ENCODE measurements at regions of chr9 and their contacts with region 1.

Region 1: DNA sequence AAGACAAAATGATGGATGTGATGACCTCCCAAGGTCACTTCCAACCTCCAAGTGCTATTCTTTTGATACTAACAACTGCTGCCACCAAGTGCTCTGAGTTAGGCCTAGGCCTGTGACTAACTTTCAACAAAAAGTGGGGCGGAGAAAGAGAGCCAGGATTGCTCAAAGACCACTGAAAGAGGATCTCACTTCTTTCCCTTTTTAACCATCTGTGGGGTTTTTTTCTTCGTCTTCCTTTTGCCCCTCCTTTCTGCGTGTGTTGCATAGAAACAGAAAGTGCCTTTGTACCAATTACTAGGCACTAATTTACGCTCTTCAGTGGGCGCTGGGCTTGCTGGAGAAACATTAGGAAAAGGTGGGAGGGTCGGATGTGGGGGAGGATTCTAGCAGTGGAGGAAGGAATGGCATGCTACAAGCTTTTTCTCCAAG is 8.0 kb downstream of the KLF9 start:
- H3K4me3 ChIP-seq: no peak overlapping the region
- H3K27ac ChIP-seq: no peak overlapping the region
- H3K4me1 ChIP-seq: peaks cover 25% of the 10 kb centered on the region
- CTCF ChIP-seq: no peak

Region 2: DNA sequence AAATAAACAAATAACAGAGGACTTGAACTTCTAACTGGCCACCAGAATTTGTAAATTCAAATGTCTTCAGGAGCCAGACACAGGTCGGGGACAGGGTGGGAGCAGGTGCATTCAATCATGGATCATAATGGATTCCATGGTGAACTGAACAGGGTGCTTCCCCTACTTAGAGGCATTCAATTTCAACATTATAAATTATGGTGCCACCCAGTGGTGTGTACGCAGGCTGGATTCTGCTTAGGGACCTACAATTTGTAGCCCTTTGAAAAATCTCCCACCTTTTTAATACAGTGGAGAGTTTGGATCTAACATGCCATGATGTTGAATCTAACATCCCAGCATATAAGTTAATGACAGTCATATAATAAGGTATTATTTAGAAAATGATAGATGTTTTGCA is 14.3 kb before region 1 on chr9:
- CTCF ChIA-PET with region 1: interaction called, 11 read pairs
- POLR2A ChIA-PET with region 1: no interaction called
- H3K4me3 ChIP-seq: no peak overlapping the region
- H3K27ac ChIP-seq: no peak overlapping the region
- H3K4me1 ChIP-seq: peaks cover 5% of the 10 kb centered on the region; the same call in 1 of the 2 replicates
- CTCF ChIP-seq: no peak

Region 3: DNA sequence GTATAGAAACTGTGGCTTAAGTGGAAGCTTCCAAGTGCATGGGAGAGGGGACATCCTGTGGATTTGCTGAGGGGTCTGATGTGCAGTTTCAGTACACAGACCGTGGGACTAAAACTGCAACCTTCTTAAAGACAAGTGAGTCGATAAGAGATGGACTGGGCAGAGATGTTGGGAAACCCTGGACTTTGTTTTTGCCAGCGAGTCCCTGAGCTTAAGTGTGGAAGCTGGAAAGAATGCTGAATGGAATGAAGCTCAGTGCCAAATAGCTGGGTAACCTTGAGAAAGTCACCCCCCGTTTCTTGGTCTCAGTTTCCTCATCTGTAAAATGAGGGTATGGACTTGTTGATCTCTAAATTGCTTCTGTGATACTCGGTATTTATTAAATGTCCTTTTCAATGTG is 45.3 kb after region 1 on chr9:
- CTCF ChIA-PET with region 1: no interaction called
- POLR2A ChIA-PET with region 1: no interaction called
- H3K4me3 ChIP-seq: no peak overlapping the region
- H3K27ac ChIP-seq: no peak overlapping the region
- H3K4me1 ChIP-seq: no peaks in the 10 kb centered on the region
- CTCF ChIP-seq: no peak

Region 4: GRCh38 chr9:70470050-70471015 is 63.9 kb after region 1 on chr9:
- CTCF ChIA-PET with region 1: no interaction called
- POLR2A ChIA-PET with region 1: no interaction called
- H3K4me3 ChIP-seq: no peak overlapping the region
- H3K27ac ChIP-seq: no peak overlapping the region
- H3K4me1 ChIP-seq: no peaks in the 10 kb centered on the region
- CTCF ChIP-seq: no peak

Region 5: DNA sequence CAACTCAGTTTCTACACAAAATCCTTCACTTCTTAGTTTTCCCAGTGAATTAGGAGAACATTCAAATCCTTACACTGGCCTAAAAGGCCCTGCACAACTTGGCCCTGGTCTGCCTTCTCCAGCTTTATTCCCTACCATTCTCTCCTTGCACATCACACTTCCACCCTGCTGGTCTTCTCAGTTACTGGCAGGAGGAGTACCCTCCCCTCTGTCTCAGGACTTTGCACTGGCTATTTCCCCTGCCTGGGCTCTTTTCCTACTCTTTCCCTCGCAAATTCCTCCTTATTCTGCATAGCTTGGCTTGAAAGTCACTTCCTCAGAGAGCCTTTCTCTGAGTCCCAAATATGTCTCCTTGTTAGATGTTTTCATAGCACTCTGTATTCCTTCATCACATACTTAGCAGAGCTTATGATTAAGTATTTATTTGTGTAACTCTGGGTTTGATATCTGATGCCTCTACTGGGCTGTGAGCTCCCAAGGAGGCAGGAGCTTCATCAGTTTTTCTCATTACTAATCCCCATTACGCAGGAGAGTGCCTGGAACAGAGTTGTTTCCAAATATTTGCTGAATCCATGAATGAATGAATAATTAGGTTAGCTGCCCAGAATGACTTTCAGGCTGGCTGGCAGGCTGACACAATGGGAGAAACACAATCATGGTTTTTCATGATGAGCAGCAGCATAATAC is 167.8 kb after region 1 on chr9:
- CTCF ChIA-PET with region 1: no interaction called
- POLR2A ChIA-PET with region 1: no interaction called
- H3K4me3 ChIP-seq: no peak overlapping the region
- H3K27ac ChIP-seq: no peak overlapping the region
- H3K4me1 ChIP-seq: peaks cover 4% of the 10 kb centered on the region; the same call in 1 of the 2 replicates
- CTCF ChIP-seq: no peak

Measured in HEK293 (cell line).